Activated naive CD4-positive, alpha-beta T cell treated with anti-CD3 and anti-CD28 coated beads, Interleukin-2, amount 10 ng/mL, durations not matched to agents 7 days and 5 days (primary cell): ENCODE measurements at regions of chr3 and their contacts with region 1.

Region 1: DNA sequence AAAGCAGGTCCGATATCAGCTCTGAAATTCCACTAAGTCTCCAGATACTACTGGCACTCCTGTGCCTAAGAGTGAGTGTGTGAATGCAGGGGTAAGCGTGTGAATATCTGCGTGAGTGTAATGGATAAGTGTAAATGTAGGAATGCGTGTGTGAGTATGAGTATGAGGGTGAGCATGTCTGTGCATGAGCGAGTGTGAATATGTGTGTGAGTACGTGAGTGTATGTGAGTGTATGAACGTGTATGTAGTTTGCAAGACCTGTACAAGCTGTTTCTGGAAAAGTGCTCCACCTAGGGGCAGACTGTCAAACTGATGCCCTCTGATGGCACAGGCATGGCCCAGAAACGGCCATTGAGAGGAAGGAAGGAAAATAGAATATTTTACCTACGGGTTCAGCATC is 24.4 kb upstream of the FRMD4B start:
- DNase-seq: peak; percentile 81
- H3K4me3 Mint-ChIP-seq: no peak overlapping the region
- H3K27ac Mint-ChIP-seq: no peak overlapping the region
- H3K4me1 Mint-ChIP-seq: no peaks in the 10 kb centered on the region
- H3K27me3 Mint-ChIP-seq: peaks cover 21% of the 10 kb centered on the region

Region 2: GRCh38 chr3:69324362-69325025 is 85.8 kb before region 1 on chr3:
- CTCF ChIA-PET with region 1: interaction called, 23 read pairs
- DNase-seq: no peak
- H3K4me3 Mint-ChIP-seq: no peak overlapping the region
- H3K27ac Mint-ChIP-seq: peak overlapping the region; percentile 60
- H3K4me1 Mint-ChIP-seq: peaks cover 42% of the 10 kb centered on the region
- H3K27me3 Mint-ChIP-seq: no peaks in the 10 kb centered on the region

Region 3: GRCh38 chr3:69385723-69386555 is 24.3 kb before region 1 on chr3 and contains the start of gene FRMD4B:
- CTCF ChIA-PET with region 1: interaction called, 19 read pairs
- DNase-seq: peak; percentile 49
- H3K4me3 Mint-ChIP-seq: peak within 1 kb of the TSS; percentile 21
- H3K27ac Mint-ChIP-seq: no peak within 1 kb of the TSS
- H3K4me1 Mint-ChIP-seq: peaks cover 15% of the 10 kb centered on the region
- H3K27me3 Mint-ChIP-seq: peaks cover 82% of the 10 kb centered on the region

Region 4: GRCh38 chr3:69425261-69425660 is 15.0 kb after region 1 on chr3:
- CTCF ChIA-PET with region 1: interaction called, 12 read pairs
- DNase-seq: peak; percentile 41
- H3K4me3 Mint-ChIP-seq: no peak overlapping the region
- H3K27ac Mint-ChIP-seq: no peak overlapping the region
- H3K4me1 Mint-ChIP-seq: peaks cover 2% of the 10 kb centered on the region
- H3K27me3 Mint-ChIP-seq: peaks cover 4% of the 10 kb centered on the region

Region 5: GRCh38 chr3:69547461-69547880 is 137.2 kb after region 1 on chr3:
- CTCF ChIA-PET with region 1: no interaction called
- DNase-seq: no peak
- H3K4me3 Mint-ChIP-seq: no peak overlapping the region
- H3K27ac Mint-ChIP-seq: no peak overlapping the region
- H3K4me1 Mint-ChIP-seq: no peaks in the 10 kb centered on the region
- H3K27me3 Mint-ChIP-seq: peaks cover 16% of the 10 kb centered on the region